ENCODE measurements at regions of chr14 and their contacts with region 1.

Region 1: DNA sequence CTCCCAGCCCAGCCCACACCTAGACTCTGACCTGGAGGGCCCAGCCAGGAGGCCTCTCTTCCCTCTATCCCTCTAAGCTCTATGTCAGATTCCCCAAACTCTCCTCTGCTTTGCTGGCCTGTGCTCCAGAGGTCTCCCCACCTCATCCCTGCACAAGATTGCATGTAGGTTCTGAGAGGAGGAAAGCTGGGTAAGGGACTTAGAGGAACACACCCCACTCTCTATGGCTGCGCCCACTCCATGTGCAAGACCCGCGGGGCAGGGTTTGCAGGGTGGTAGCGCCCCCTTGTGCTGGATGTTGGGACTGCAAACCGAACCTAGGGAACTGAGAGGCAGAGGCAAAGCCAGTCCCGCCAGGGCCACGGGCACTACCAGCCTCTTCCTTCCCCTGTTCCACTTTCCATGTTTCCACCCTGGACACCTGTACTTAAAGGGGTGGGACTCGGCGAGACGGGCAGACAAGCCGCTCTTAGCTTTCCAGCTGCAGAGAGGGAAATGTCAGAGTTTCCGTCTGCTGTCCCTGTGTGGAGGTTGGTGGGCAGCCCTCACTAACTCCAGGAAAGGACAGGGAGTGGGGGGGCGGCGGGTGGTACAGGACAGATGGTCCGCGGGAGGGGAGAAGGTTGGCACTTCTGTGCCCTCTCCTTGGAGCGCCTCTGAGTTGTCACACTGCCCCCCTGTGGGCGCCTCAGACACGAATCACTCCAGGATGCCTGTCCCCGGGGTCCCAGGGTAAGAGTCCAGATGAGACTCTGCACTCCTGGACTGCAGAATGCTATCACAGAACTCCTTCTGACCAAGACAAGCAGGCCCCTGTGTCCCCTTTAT is 16.8 kb downstream of the MMP14 start:
- DNase-seq: peak; percentile 99
- H3K4me3 ChIP-seq: peak overlapping the region; percentile 45 to 60 (median 46)
- H3K27ac ChIP-seq: peak overlapping the region; percentile 36 to 93 (median 88)
- H3K4me1 ChIP-seq: peaks cover 46 to 55% (median 53%) of the 10 kb centered on the region in 4 donors
- H3K27me3 ChIP-seq: no peaks in the 10 kb centered on the region
- CTCF ChIP-seq: peak; percentile 73 to 94 (median 91)
- EP300 ChIP-seq: no peak
- POLR2A ChIP-seq: no peak

Region 2: GRCh38 chr14:22685467-22685866 is 167.7 kb before region 1 on chr14:
- intact Hi-C with region 1: no loop called
- DNase-seq: no peak
- H3K4me3 ChIP-seq: no peak overlapping the region
- H3K27ac ChIP-seq: no peak overlapping the region
- H3K4me1 ChIP-seq: no peaks in the 10 kb centered on the region
- H3K27me3 ChIP-seq: peaks cover 0 to 16% (median 0%) of the 10 kb centered on the region in 4 donors
- CTCF ChIP-seq: no peak
- EP300 ChIP-seq: no peak
- POLR2A ChIP-seq: no peak

Region 3: GRCh38 chr14:22822571-22823098 is 30.5 kb before region 1 on chr14:
- intact Hi-C with region 1: loop called (anchors 1 kb)
- DNase-seq: peak; percentile 95
- H3K4me3 ChIP-seq: peak overlapping the region; percentile 52 to 67 (median 55)
- H3K27ac ChIP-seq: peak overlapping the region; percentile 65 to 84 (median 75)
- H3K4me1 ChIP-seq: peaks cover 20 to 55% (median 47%) of the 10 kb centered on the region in 4 donors
- H3K27me3 ChIP-seq: no peaks in the 10 kb centered on the region
- CTCF ChIP-seq: peak; percentile 89 to 94 (median 90)
- EP300 ChIP-seq: no peak
- POLR2A ChIP-seq: no peak

Region 4: DNA sequence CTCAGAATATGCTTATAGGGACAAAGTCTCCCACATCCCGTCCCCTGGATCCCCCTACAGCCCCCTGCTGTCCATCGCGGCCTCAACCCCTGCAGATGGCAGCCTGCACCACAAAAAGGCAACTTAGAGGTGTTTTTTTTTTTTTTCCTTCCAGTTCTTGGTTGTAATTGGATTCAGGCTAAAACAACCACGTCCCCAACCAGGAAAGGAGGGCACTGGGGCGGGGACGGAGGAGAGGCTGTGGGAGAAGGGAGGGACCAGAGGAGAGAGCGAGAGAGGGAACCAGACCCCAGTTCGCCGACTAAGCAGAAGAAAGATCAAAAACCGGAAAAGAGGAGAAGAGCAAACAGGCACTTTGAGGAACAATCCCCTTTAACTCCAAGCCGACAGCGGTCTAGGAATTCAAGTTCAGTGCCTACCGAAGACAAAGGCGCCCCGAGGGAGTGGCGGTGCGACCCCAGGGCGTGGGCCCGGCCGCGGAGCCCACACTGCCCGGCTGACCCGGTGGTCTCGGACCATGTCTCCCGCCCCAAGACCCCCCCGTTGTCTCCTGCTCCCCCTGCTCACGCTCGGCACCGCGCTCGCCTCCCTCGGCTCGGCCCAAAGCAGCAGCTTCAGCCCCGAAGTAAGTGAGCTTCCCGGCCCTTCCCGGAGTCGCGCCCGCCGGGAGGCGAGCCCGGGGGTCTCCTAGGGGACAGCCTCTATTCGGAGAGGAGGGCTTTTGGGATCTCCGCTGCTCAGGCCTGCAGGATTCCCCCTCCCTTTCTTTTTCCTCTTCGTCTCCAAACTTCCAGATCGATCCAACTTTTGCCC is 16.6 kb before region 1 on chr14 and contains the start of gene MMP14:
- intact Hi-C with region 1: loop called (anchors 2 kb)
- DNase-seq: peak; percentile 96
- H3K4me3 ChIP-seq: peak within 1 kb of the TSS; percentile 84 to 94 (median 90)
- H3K27ac ChIP-seq: peak within 1 kb of the TSS; percentile 93 to 97 (median 95)
- H3K4me1 ChIP-seq: peaks cover 24 to 51% (median 45%) of the 10 kb centered on the region in 4 donors
- H3K27me3 ChIP-seq: no peaks in the 10 kb centered on the region
- CTCF ChIP-seq: peak; percentile 44 to 63 (median 53)
- EP300 ChIP-seq: no peak
- POLR2A ChIP-seq: peak; percentile 72
- total RNA-seq, gene MMP14: 83.9 to 149 (median 123) TPM

Measured in esophagus muscularis mucosa (tissue), 4 donors.